GM12878 (cell line): ENCODE measurements at regions of chr6 and their contacts with region 1.

Region 1: DNA sequence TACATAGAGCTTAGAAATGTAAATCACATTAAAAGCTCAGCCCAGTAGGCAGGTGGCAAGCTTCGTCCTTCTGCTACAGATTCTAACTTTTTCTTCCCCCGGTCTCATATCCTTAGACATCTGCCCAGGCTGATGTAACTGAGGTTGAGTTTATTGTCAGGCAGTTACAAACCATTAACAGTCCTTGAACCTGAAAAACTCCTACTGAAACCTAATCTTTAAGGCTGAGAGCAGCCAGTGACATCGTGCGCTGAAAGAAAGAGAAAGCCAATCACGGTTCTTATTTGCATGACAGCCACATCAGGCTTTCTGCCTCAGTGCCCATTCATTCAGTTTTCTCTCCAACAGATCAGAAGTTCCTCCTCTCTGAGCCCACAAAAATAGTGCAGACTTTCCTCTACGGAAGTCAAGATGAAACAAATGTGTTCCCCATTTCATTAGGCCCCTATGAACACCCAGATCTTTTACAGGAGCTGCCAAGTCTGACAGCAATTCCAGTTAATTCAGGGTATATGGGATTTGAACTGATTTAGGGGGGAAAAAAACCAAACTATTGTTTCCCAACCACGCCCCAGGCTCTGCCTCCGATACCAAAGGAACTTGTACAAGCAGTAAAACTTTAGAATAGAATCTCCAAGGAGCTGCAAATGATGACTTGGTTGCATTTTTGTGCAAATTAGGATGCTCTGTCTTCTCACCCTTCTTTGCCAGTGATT is at the start of gene NHSL1:
- DNase-seq: peak; percentile 34
- ATAC-seq: peak; percentile 92
- H3K4me3 ChIP-seq: no peak within 1 kb of the TSS
- H3K27ac ChIP-seq: no peak within 1 kb of the TSS
- H3K4me1 ChIP-seq: no peaks in the 10 kb centered on the region
- H3K27me3 ChIP-seq: peaks cover 0 to 10% of the 10 kb centered on the region in 2 experiments; a peak in 2 of 4 replicates
- CTCF ChIP-seq: no peak
- EP300 ChIP-seq: no peak
- POLR2A ChIP-seq: no peak
- RAD21 ChIP-seq: no peak
- polyA plus RNA-seq, gene NHSL1: 0.26 to 0.66 TPM

Region 2: DNA sequence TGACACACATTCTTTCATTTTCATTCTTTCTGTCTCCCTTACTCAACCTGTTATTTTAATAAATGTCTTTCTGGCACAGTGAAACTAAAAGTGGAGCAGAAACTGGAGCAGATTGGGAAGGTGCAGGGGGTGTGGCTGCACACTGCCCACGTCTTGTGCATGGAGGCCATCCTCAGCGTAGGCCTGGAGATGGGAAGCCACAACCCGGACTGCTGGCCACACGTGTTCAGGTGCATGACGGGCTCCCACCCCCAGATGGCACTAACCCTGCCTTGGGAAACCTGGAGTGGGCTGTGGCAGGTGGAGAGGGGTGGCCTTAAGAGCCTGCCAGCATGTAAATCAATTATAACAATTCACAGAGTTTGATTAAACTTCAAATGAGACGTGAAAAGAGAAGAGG is 209.7 kb before region 1 on chr6:
- CTCF ChIA-PET with region 1: no interaction called
- POLR2A ChIA-PET with region 1: no interaction called
- RAD21 ChIA-PET with region 1: no interaction called
- SMC1A ChIA-PET with region 1: no interaction called
- in situ Hi-C with region 1: no loop called
- intact Hi-C with region 1: no loop called
- DNase-seq: no peak
- ATAC-seq: peak; percentile 72
- H3K4me3 ChIP-seq: no peak overlapping the region
- H3K27ac ChIP-seq: no peak overlapping the region
- H3K4me1 ChIP-seq: no peaks in the 10 kb centered on the region
- H3K27me3 ChIP-seq: no peaks in the 10 kb centered on the region
- CTCF ChIP-seq: peak; percentile 17 to 38 (median 20); a peak in 2 of 6 replicates
- EP300 ChIP-seq: no peak
- POLR2A ChIP-seq: no peak
- RAD21 ChIP-seq: no peak

Region 3: GRCh38 chr6:138428944-138429598 is 70.4 kb before region 1 on chr6:
- CTCF ChIA-PET with region 1: interaction called, 387 read pairs
- POLR2A ChIA-PET with region 1: interaction called, 3 read pairs
- RAD21 ChIA-PET with region 1: interaction called, 202 read pairs
- SMC1A ChIA-PET with region 1: interaction called, 234 read pairs
- in situ Hi-C with region 1: no loop called
- intact Hi-C with region 1: no loop called
- DNase-seq: no peak
- ATAC-seq: peak; percentile 80
- H3K4me3 ChIP-seq: no peak overlapping the region
- H3K27ac ChIP-seq: no peak overlapping the region
- H3K4me1 ChIP-seq: no peaks in the 10 kb centered on the region
- H3K27me3 ChIP-seq: no peaks in the 10 kb centered on the region
- CTCF ChIP-seq: peak; percentile 38 to 69 (median 55); a peak in 5 of 6 replicates
- EP300 ChIP-seq: no peak
- POLR2A ChIP-seq: no peak
- RAD21 ChIP-seq: peak; percentile 81

Region 4: GRCh38 chr6:138434925-138435324 is 64.5 kb before region 1 on chr6:
- CTCF ChIA-PET with region 1: interaction called, 387 read pairs
- POLR2A ChIA-PET with region 1: interaction called, 5 read pairs
- RAD21 ChIA-PET with region 1: interaction called, 202 read pairs
- SMC1A ChIA-PET with region 1: interaction called, 234 read pairs
- in situ Hi-C with region 1: no loop called
- intact Hi-C with region 1: no loop called
- DNase-seq: no peak
- ATAC-seq: no peak
- H3K4me3 ChIP-seq: no peak overlapping the region
- H3K27ac ChIP-seq: no peak overlapping the region
- H3K4me1 ChIP-seq: no peaks in the 10 kb centered on the region
- H3K27me3 ChIP-seq: no peaks in the 10 kb centered on the region
- CTCF ChIP-seq: no peak
- EP300 ChIP-seq: no peak
- POLR2A ChIP-seq: no peak
- RAD21 ChIP-seq: no peak

Region 5: DNA sequence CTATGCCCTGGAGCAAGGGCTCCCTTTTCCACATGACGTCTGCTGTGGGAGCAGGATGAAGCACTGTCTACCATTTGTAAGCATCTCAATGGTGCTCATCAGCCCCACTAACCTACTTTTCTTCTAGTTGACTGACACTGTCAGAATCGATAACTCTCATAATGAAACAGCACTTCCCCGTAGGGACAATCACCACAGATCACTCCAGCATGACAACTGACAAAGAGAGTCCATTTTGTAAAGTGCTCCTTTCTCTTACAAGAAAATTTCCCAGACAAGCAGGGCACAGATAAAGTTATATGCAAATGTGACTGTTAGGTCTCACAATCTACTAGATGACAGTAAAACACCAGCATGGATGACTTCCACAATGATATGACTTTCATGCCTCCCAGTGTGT is 49.0 kb before region 1 on chr6:
- CTCF ChIA-PET with region 1: interaction called, 99 read pairs
- POLR2A ChIA-PET with region 1: interaction called, 11 read pairs
- RAD21 ChIA-PET with region 1: interaction called, 41 read pairs
- SMC1A ChIA-PET with region 1: interaction called, 88 read pairs
- in situ Hi-C with region 1: no loop called
- intact Hi-C with region 1: no loop called
- DNase-seq: peak; percentile 23
- ATAC-seq: peak; percentile 81
- H3K4me3 ChIP-seq: no peak overlapping the region
- H3K27ac ChIP-seq: no peak overlapping the region
- H3K4me1 ChIP-seq: peaks cover 9% of the 10 kb centered on the region
- H3K27me3 ChIP-seq: no peaks in the 10 kb centered on the region
- CTCF ChIP-seq: no peak
- EP300 ChIP-seq: peak; percentile 22 to 46; a peak in 2 of 4 replicates
- POLR2A ChIP-seq: no peak
- RAD21 ChIP-seq: no peak

Region 6: DNA sequence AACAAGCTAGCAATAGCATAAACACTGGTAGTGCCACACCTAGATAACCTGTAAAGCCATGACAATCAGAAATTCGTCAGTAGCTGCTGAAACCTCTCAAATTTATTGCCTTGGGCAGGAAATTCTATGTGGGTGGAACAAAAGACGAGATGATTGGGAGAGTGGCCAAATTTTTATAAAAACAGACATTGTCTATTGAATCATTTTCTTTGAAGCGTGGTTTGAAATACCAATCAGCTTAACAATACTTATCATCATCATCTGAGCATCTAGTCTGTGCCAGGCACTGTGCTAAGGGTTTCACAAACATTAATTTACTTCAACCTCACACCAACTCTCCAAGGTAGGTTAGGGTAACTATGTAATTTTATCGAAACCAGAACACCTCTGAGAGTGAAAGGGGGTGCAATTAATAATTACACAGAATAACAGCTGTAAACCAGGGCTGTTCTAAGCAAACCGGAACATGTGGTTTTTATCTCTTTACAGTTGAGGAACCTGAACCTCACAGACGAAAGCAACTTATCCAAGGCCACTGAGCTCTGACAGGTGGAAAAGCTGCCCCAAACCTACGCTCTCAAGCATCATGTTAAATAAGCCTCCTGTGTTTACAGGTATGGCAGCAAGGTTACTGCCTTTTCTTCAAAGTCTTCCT is 43.6 kb before region 1 on chr6:
- CTCF ChIA-PET with region 1: interaction called, 99 read pairs
- POLR2A ChIA-PET with region 1: interaction called, 11 read pairs
- RAD21 ChIA-PET with region 1: interaction called, 41 read pairs
- SMC1A ChIA-PET with region 1: interaction called, 88 read pairs
- in situ Hi-C with region 1: no loop called
- intact Hi-C with region 1: loop called (anchors 2 kb)
- DNase-seq: peak; percentile 77
- ATAC-seq: peak; percentile 92
- H3K4me3 ChIP-seq: no peak overlapping the region
- H3K27ac ChIP-seq: no peak overlapping the region
- H3K4me1 ChIP-seq: peaks cover 21% of the 10 kb centered on the region
- H3K27me3 ChIP-seq: no peaks in the 10 kb centered on the region
- CTCF ChIP-seq: no peak
- EP300 ChIP-seq: peak; percentile 75 to 83
- POLR2A ChIP-seq: no peak
- RAD21 ChIP-seq: no peak

Region 7: GRCh38 chr6:138485005-138485545 is 14.4 kb before region 1 on chr6:
- CTCF ChIA-PET with region 1: interaction called, 19 read pairs
- POLR2A ChIA-PET with region 1: interaction called, 28 read pairs
- RAD21 ChIA-PET with region 1: interaction called, 14 read pairs
- SMC1A ChIA-PET with region 1: interaction called, 139 read pairs
- in situ Hi-C with region 1: no loop called
- intact Hi-C with region 1: no loop called
- DNase-seq: no peak
- ATAC-seq: no peak
- H3K4me3 ChIP-seq: no peak overlapping the region
- H3K27ac ChIP-seq: no peak overlapping the region
- H3K4me1 ChIP-seq: no peaks in the 10 kb centered on the region
- H3K27me3 ChIP-seq: no peaks in the 10 kb centered on the region; a peak in 1 of 4 replicates
- CTCF ChIP-seq: no peak
- EP300 ChIP-seq: no peak
- POLR2A ChIP-seq: no peak
- RAD21 ChIP-seq: no peak